Activated CD8-positive, alpha-beta T cell treated with anti-CD3 and anti-CD28 coated beads, Interleukin-2, amount 10 ng/mL, durations not matched to agents 7 days and 5 days (primary cell): ENCODE measurements at regions of chr16 and their contacts with region 1.

Region 1: GRCh38 chr16:69754469-69755310 is at the start of gene NOB1:
- DNase-seq: peak; percentile 97
- ATAC-seq: peak; percentile 99
- H3K4me3 Mint-ChIP-seq: peak within 1 kb of the TSS; percentile 100
- H3K27ac Mint-ChIP-seq: peak within 1 kb of the TSS; percentile 98
- H3K4me1 Mint-ChIP-seq: peaks cover 30% of the 10 kb centered on the region
- H3K27me3 Mint-ChIP-seq: no peaks in the 10 kb centered on the region
- total RNA-seq, gene NOB1: 53.3 to 58.8 TPM

Region 2: DNA sequence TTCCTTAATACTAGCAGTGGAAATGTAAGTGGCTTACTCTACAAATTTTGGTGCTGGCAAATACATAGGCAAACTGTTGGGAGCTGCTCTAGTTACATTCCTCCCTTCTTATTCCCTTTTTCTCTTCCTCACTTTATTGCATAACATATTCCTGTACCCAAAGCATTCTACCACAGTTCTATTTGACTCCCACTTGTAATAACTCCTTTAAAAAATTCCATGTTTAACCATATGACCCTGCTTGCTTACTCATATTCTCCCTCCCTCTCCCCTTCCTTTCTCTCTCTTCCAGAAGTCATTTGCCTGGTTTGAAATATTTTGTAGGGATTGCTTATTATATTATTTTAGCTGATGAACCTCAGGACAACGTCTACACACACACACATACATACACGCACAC is 51.1 kb before region 1 on chr16:
- CTCF ChIA-PET with region 1: interaction called, 77 read pairs
- POLR2A ChIA-PET with region 1: interaction called, 7 read pairs
- DNase-seq: no peak
- ATAC-seq: no peak
- H3K4me3 Mint-ChIP-seq: no peak overlapping the region
- H3K27ac Mint-ChIP-seq: no peak overlapping the region
- H3K4me1 Mint-ChIP-seq: no peaks in the 10 kb centered on the region
- H3K27me3 Mint-ChIP-seq: no peaks in the 10 kb centered on the region

Region 3: DNA sequence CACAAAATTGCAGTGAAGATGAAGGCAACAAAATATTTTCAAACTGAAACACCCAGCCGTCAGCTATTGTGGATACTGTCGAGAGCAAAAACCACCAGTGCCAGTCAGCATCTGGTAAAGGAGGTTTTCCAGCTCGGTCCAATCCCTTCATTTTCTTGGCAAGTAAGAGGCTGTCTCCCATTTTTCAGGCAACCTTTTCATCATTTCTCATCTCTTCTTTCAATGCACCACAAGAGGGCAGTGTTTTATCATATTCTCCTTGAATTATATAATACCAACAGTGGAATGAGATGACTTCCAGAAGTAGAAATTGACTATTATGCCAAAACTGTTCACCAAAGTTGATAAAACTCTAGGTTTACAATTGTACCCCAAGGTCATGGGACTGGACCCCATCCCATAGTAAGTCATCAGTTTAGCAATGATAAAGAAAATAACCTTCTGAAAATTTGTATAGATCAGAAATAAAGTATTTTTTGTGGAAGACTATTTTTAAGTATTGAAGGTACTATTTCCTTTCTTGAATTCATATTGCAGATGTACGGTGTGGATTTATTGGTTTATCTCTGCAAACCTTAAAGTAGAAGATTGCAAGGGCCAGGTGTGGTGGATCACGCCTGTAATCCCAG is 45.1 kb before region 1 on chr16:
- CTCF ChIA-PET with region 1: interaction called, 77 read pairs
- POLR2A ChIA-PET with region 1: interaction called, 7 read pairs
- DNase-seq: no peak
- ATAC-seq: peak; percentile 58
- H3K4me3 Mint-ChIP-seq: no peak overlapping the region
- H3K27ac Mint-ChIP-seq: no peak overlapping the region
- H3K4me1 Mint-ChIP-seq: no peaks in the 10 kb centered on the region
- H3K27me3 Mint-ChIP-seq: no peaks in the 10 kb centered on the region

Region 4: DNA sequence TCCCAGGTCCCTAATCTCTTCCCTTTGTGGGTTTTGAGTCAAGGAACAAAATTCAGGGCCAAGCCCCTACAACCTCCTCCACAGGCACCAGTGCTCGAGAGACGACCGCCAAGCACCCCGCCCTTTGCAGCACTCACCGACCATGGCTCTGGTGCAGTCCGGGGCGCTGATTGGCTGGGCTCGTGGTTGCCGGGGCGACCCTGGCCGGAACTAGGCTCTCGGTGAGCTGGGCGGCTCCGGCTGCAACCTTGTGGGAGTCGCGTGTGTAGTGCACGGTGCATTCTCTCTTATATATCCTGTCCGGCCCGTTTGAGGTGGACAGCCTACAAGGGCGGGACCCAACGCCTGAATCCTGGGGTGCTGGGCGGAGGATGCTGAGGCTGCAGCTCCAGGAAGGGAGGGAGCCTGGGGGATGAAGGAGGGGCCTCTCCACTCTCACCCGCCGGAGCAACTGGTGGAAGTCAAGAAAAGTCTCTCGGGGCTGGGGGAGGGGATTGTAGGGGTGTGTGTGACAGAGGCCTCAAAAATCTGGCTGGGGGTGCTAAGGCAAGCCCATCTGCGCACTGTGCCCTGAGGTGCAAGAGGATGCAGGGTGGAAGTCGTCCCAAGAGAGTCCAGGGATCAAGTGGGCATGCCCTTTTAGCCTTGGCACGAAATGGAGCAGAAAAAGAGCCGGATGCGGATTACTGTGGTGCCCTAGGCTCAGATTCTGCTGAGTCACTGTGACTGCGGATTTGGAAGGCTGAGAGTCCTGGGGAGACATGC is 28.2 kb before region 1 on chr16 and contains the start of gene NQO1:
- CTCF ChIA-PET with region 1: interaction called, 43 read pairs
- POLR2A ChIA-PET with region 1: interaction called, 35 read pairs
- DNase-seq: peak; percentile 95
- ATAC-seq: peak; percentile 99
- H3K4me3 Mint-ChIP-seq: peak within 1 kb of the TSS; percentile 84
- H3K27ac Mint-ChIP-seq: peak within 1 kb of the TSS; percentile 94
- H3K4me1 Mint-ChIP-seq: peaks cover 51% of the 10 kb centered on the region
- H3K27me3 Mint-ChIP-seq: no peaks in the 10 kb centered on the region
- total RNA-seq, gene NQO1: 18.3 to 20.1 TPM